ENCODE measurements at regions of chr14 and their contacts with region 1.

Region 1: GRCh38 chr14:44961604-44962333 is at the starts of genes KLHL28 and TOGARAM1:
- DNase-seq: peak; percentile 98
- H3K4me3 Mint-ChIP-seq: no peak within 1 kb of the TSS
- H3K27ac Mint-ChIP-seq: no peak within 1 kb of the TSS
- H3K4me1 Mint-ChIP-seq: peaks cover 55% of the 10 kb centered on the region
- H3K27me3 Mint-ChIP-seq: no peaks in the 10 kb centered on the region
- total RNA-seq, gene KLHL28: 19.1 to 19.8 TPM
- total RNA-seq, gene TOGARAM1: 6.5 to 6.6 TPM

Region 2: GRCh38 chr14:44928793-44929192 is 33.0 kb before region 1 on chr14:
- CTCF ChIA-PET with region 1: no interaction called
- POLR2A ChIA-PET with region 1: interaction called, 16 read pairs
- DNase-seq: no peak
- H3K4me3 Mint-ChIP-seq: peak overlapping the region; percentile 35
- H3K27ac Mint-ChIP-seq: peak overlapping the region; percentile 62
- H3K4me1 Mint-ChIP-seq: peaks cover 19% of the 10 kb centered on the region
- H3K27me3 Mint-ChIP-seq: no peaks in the 10 kb centered on the region

Region 3: DNA sequence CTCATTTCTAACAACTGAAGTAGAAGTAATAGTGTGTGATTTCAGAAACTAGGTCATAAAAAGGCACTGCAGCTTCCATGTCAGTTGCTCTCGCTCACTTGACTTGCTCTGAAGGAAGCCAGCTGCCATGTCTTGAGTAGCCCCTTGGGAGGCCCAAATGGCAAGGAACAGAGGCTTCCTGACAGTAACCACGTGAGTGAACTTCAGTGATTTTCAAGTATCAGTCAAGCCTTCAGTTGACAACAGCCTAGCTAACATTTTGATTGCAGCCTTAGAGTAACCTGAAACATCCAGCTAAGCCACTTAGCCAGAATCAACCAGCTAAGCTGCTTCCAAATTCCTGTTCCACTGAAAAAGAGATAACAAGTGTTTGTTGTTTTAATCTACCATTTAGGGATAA is 26.9 kb after region 1 on chr14:
- CTCF ChIA-PET with region 1: no interaction called
- POLR2A ChIA-PET with region 1: no interaction called
- DNase-seq: no peak
- H3K4me3 Mint-ChIP-seq: no peak overlapping the region
- H3K27ac Mint-ChIP-seq: no peak overlapping the region
- H3K4me1 Mint-ChIP-seq: no peaks in the 10 kb centered on the region
- H3K27me3 Mint-ChIP-seq: no peaks in the 10 kb centered on the region

Region 4: DNA sequence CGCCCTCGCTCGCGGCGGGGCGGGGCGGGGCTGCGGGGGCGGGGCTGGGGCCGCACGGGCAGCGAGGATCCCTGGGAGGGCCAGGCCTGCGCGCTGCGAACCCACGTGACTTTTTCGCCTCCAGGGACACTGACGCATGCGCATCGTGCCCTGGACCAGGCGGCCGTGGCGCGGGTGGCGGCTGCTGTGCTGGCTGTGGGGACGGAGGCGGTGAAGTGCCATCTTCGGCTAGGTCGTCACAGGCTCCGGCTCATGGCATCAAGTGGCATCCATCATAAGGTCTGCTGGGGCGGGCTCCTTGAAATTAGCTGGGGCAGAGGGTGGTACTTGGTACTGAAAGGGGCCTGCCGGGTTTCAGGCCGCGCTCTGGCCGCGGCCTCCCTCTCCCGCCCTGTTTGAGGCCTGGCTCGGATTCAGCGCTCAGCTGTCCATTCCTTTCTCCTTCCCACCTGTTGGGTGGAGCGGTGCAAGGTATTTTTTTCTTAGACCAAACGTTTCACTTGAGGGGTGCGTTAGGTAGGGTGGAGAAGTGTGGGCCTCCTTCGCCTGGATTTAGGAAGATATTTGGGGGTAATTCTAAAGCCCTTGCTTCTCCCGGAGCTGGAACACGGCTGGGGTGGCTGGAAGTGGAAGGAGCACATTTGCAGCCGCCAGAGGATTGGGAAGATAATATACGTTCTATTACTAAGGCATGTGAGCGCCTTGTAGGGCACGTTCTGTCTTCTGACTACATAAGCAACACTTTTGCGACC is 122.4 kb after region 1 on chr14 and contains the start of gene PRPF39:
- CTCF ChIA-PET with region 1: interaction called, 3 read pairs
- POLR2A ChIA-PET with region 1: interaction called, 62 read pairs
- DNase-seq: peak; percentile 96
- H3K4me3 Mint-ChIP-seq: peak within 1 kb of the TSS; percentile 95
- H3K27ac Mint-ChIP-seq: peak within 1 kb of the TSS; percentile 89
- H3K4me1 Mint-ChIP-seq: peaks cover 50% of the 10 kb centered on the region
- H3K27me3 Mint-ChIP-seq: no peaks in the 10 kb centered on the region
- total RNA-seq, gene PRPF39: 35.6 to 42.7 TPM

Region 5: GRCh38 chr14:45134051-45134958 is 172.5 kb after region 1 on chr14 and contains the start of gene FKBP3:
- CTCF ChIA-PET with region 1: interaction called, 4 read pairs
- POLR2A ChIA-PET with region 1: interaction called, 77 read pairs
- DNase-seq: peak; percentile 96
- H3K4me3 Mint-ChIP-seq: peak within 1 kb of the TSS; percentile 90
- H3K27ac Mint-ChIP-seq: peak within 1 kb of the TSS; percentile 99
- H3K4me1 Mint-ChIP-seq: peaks cover 43% of the 10 kb centered on the region
- H3K27me3 Mint-ChIP-seq: no peaks in the 10 kb centered on the region
- total RNA-seq, gene FKBP3: 54.9 to 57.7 TPM